SK-N-SH (cell line): ENCODE measurements at regions of chr5 and their contacts with region 1.

Region 1: DNA sequence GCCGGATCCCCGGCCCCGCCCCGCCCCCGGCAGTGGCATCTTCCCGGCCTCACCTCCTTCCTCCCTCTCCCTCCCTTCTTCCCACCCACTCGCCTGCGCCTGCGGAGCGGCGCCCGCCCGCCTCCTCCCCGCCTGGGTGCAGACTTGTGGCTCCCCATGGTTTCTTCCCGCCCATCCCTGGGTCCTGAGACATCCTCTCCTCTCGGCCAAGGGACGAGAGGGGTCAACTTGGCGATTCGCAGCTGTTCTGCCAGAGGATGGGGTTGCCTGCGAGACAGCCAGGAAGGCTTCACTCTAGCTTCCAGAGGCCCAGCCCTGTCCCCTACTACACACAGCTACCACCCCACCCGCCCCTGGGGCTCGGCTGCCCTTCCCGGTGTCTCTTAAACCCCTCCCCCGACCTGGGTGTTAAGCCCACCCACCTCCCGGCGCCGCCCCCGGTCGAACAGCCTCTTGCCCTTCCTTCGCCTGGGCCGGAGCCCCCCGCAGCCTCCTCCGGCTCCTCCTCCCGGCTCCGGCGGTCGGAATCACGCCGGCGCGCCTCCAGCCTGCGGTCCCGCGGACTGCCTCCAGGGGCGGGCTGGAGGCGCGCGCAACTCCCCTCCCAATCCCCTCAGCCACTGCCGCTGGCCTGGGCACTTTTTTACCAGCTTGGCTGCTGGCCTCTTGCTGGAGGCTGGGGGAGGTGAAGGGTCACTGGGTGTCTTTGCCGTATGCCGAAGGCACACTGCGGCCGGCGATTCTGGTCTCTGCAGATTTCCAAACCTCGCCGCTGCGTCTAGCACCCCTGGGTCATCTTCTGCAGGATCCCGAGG is 1.9 kb downstream of the JADE2 start:
- DNase-seq: peak; percentile 93
- H3K4me3 ChIP-seq: peak overlapping the region; percentile 90 to 92
- H3K27ac ChIP-seq: peak overlapping the region; percentile 91 to 98
- H3K4me1 ChIP-seq: peaks cover 10 to 42% of the 10 kb centered on the region in 2 experiments; a peak in 3 of 4 replicates
- H3K27me3 ChIP-seq: no peaks in the 10 kb centered on the region
- CTCF ChIP-seq: peak; percentile 70
- EP300 ChIP-seq: no peak
- RAD21 ChIP-seq: peak; percentile 63

Region 2: GRCh38 chr5:134370871-134371833 is 156.2 kb before region 1 on chr5 and contains the start of gene UBE2B:
- CTCF ChIA-PET with region 1: interaction called, 10 read pairs
- POLR2A ChIA-PET with region 1: interaction called, 15 read pairs
- DNase-seq: peak; percentile 94
- H3K4me3 ChIP-seq: peak within 1 kb of the TSS; percentile 93 to 95
- H3K27ac ChIP-seq: peak within 1 kb of the TSS; percentile 98
- H3K4me1 ChIP-seq: peaks cover 0 to 13% of the 10 kb centered on the region in 2 experiments; a peak in 3 of 4 replicates
- H3K27me3 ChIP-seq: no peaks in the 10 kb centered on the region
- CTCF ChIP-seq: no peak
- EP300 ChIP-seq: peak in 1 of 2 experiments; percentile 94; a peak in 2 of 4 replicates
- RAD21 ChIP-seq: no peak
- polyA plus RNA-seq, gene UBE2B: 24.3 and 28.0 TPM in 2 replicates

Region 3: DNA sequence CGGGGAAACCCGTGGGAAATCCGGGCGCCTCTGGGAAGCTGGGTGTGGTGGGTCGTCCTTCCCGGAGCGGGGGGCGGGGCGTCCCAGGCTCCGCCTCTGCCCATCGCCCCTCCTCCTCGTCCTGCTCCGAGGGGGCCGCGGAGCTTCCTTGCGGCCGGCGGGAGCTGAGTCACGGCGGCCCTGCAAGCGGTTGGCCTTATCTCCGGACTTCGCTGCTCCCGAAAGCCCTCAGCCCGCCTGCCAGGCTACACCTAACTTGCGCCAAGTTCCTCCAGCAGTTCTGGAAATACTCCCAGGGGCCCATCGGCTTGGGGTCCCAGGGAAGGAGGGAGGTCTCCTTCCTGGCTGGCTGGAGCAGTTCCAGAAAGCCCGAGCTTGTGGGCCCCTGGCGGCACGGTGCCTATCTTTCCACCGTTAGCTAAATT is 61.5 kb before region 1 on chr5:
- CTCF ChIA-PET with region 1: interaction called, 10 read pairs
- POLR2A ChIA-PET with region 1: interaction called, 8 read pairs
- DNase-seq: peak; percentile 95
- H3K4me3 ChIP-seq: peak overlapping the region; percentile 52 to 69
- H3K27ac ChIP-seq: peak overlapping the region; percentile 93 to 100
- H3K4me1 ChIP-seq: peaks cover 15 to 19% of the 10 kb centered on the region in 2 experiments; a peak in 2 of 4 replicates
- H3K27me3 ChIP-seq: no peaks in the 10 kb centered on the region
- CTCF ChIP-seq: no peak
- EP300 ChIP-seq: peak in 1 of 2 experiments; percentile 35; a peak in 1 of 4 replicates
- RAD21 ChIP-seq: peak; percentile 5; the same call in 1 of the 2 replicates

Region 4: DNA sequence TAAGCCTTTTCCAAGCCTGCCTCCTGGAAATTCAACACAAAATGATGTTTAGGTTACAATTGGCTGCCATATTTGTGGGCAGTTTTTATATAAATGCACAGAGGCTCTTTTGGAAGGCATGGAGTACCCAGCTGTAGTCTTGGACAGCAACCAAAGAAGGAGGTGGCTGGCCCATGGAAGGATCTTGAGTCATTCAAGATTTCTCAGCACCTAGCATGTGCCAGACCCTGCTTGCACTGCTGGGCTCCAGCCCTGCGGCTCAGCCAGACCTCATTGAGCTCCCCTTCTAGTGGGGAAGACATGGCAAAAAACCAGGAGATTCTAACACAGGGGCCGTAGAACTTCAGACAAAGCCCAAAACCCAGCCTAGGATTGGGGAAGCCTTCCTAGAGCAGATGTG is 20.2 kb after region 1 on chr5:
- CTCF ChIA-PET with region 1: interaction called, 22 read pairs
- POLR2A ChIA-PET with region 1: no interaction called
- DNase-seq: no peak
- H3K4me3 ChIP-seq: no peak overlapping the region
- H3K27ac ChIP-seq: peak overlapping the region in 1 of 2 experiments; percentile 39; a peak in 1 of 4 replicates
- H3K4me1 ChIP-seq: peaks cover 21 to 32% of the 10 kb centered on the region in 2 experiments; a peak in 3 of 4 replicates
- H3K27me3 ChIP-seq: no peaks in the 10 kb centered on the region
- CTCF ChIP-seq: no peak
- EP300 ChIP-seq: no peak
- RAD21 ChIP-seq: no peak

Region 5: DNA sequence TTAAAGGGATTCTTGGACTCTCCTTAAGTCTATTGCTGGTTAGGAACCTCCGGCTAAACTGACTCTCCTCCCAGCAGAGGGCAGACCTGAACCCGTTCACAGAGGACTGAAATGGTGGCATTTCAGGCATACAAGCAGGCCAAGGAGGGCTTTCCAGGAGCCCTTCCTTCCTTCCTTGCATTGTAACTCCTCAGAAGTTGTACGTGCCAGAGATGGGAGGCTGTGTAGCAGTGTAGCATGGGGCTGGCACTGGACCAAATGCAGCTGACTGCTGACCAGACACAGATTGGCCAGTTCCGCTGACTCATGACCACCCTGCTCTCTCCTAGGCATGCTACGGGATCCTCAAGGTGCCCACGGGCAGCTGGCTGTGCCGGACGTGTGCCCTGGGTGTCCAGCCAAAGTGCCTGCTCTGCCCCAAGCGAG is 34.5 kb after region 1 on chr5:
- CTCF ChIA-PET with region 1: interaction called, 17 read pairs
- POLR2A ChIA-PET with region 1: no interaction called
- DNase-seq: peak; percentile 49
- H3K4me3 ChIP-seq: no peak overlapping the region
- H3K27ac ChIP-seq: peak overlapping the region; percentile 23 to 32; a peak in 2 of 4 replicates
- H3K4me1 ChIP-seq: peaks cover 11 to 20% of the 10 kb centered on the region in 2 experiments; a peak in 3 of 4 replicates
- H3K27me3 ChIP-seq: no peaks in the 10 kb centered on the region
- CTCF ChIP-seq: peak; percentile 61
- EP300 ChIP-seq: no peak
- RAD21 ChIP-seq: peak; percentile 53

Region 6: DNA sequence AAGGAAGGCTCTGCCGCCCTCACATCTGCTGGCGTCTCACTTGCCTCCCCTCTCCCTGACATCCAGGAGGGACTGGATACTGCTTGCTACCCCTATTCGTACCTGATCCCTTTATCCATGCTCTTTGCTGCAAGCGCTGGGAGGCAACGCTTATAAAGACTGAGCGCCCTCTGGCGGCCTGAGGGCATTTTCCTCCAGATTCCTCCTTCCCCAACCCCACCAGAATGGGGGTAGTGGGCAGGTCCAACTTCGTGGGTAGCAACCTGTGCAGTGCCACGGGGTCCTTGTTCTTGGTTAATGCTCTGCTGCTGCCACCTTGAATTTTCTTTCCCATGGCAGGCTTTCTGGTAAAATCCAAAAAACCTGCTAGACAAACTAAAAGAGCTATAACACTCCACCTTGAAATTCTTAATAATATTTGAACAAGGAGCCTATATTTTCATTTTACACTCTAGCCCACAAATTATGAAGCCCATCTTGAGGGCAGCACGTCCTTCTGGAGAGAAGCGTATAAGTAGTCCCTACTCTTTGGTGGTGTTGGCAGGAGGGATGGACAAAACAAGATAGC is 50.5 kb after region 1 on chr5:
- CTCF ChIA-PET with region 1: interaction called, 53 read pairs
- POLR2A ChIA-PET with region 1: interaction called, 3 read pairs
- DNase-seq: peak; percentile 90
- H3K4me3 ChIP-seq: no peak overlapping the region; a peak in 1 of 4 replicates
- H3K27ac ChIP-seq: peak overlapping the region in 1 of 2 experiments; percentile 51; a peak in 3 of 4 replicates
- H3K4me1 ChIP-seq: peaks cover 6 to 20% of the 10 kb centered on the region in 2 experiments; a peak in 2 of 4 replicates
- H3K27me3 ChIP-seq: no peaks in the 10 kb centered on the region
- CTCF ChIP-seq: peak; percentile 90
- EP300 ChIP-seq: no peak
- RAD21 ChIP-seq: peak; percentile 95